MCF 10A (cell line): ENCODE measurements at regions of chr18 and their contacts with region 1.

Region 1: GRCh38 chr18:24488824-24489493 is 28.5 kb downstream of the HRH4 start:
- DNase-seq: peak; percentile 52
- H3K4me3 Mint-ChIP-seq: no peak overlapping the region
- H3K27ac Mint-ChIP-seq: no peak overlapping the region
- H3K4me1 Mint-ChIP-seq: peaks cover 9% of the 10 kb centered on the region
- H3K27me3 Mint-ChIP-seq: no peaks in the 10 kb centered on the region
- CTCF ChIP-seq: peak; percentile 59

Region 2: GRCh38 chr18:23406271-23406787 is 1082.6 kb before region 1 on chr18:
- CTCF ChIA-PET with region 1: no interaction called
- POLR2A ChIA-PET with region 1: no interaction called
- intact Hi-C with region 1: no loop called
- DNase-seq: no peak
- H3K4me3 Mint-ChIP-seq: no peak overlapping the region
- H3K27ac Mint-ChIP-seq: no peak overlapping the region
- H3K4me1 Mint-ChIP-seq: no peaks in the 10 kb centered on the region
- H3K27me3 Mint-ChIP-seq: no peaks in the 10 kb centered on the region
- CTCF ChIP-seq: no peak

Region 3: GRCh38 chr18:24271381-24272331 is 217.3 kb before region 1 on chr18:
- CTCF ChIA-PET with region 1: interaction called, 3 read pairs
- POLR2A ChIA-PET with region 1: no interaction called
- intact Hi-C with region 1: loop called (anchors 2 kb)
- DNase-seq: peak; percentile 79
- H3K4me3 Mint-ChIP-seq: peak overlapping the region; percentile 96
- H3K27ac Mint-ChIP-seq: peak overlapping the region; percentile 65
- H3K4me1 Mint-ChIP-seq: peaks cover 26% of the 10 kb centered on the region
- H3K27me3 Mint-ChIP-seq: no peaks in the 10 kb centered on the region
- CTCF ChIP-seq: no peak

Region 4: GRCh38 chr18:24432618-24433017 is 56.3 kb before region 1 on chr18:
- CTCF ChIA-PET with region 1: interaction called, 14 read pairs
- POLR2A ChIA-PET with region 1: no interaction called
- intact Hi-C with region 1: no loop called
- DNase-seq: no peak
- H3K4me3 Mint-ChIP-seq: no peak overlapping the region
- H3K27ac Mint-ChIP-seq: no peak overlapping the region
- H3K4me1 Mint-ChIP-seq: peaks cover 6% of the 10 kb centered on the region
- H3K27me3 Mint-ChIP-seq: no peaks in the 10 kb centered on the region
- CTCF ChIP-seq: no peak

Region 5: GRCh38 chr18:24475926-24476589 is 12.9 kb before region 1 on chr18:
- CTCF ChIA-PET with region 1: interaction called, 16 read pairs
- POLR2A ChIA-PET with region 1: no interaction called
- intact Hi-C with region 1: no loop called
- DNase-seq: no peak
- H3K4me3 Mint-ChIP-seq: no peak overlapping the region
- H3K27ac Mint-ChIP-seq: no peak overlapping the region
- H3K4me1 Mint-ChIP-seq: no peaks in the 10 kb centered on the region
- H3K27me3 Mint-ChIP-seq: no peaks in the 10 kb centered on the region
- CTCF ChIP-seq: no peak

Region 6: DNA sequence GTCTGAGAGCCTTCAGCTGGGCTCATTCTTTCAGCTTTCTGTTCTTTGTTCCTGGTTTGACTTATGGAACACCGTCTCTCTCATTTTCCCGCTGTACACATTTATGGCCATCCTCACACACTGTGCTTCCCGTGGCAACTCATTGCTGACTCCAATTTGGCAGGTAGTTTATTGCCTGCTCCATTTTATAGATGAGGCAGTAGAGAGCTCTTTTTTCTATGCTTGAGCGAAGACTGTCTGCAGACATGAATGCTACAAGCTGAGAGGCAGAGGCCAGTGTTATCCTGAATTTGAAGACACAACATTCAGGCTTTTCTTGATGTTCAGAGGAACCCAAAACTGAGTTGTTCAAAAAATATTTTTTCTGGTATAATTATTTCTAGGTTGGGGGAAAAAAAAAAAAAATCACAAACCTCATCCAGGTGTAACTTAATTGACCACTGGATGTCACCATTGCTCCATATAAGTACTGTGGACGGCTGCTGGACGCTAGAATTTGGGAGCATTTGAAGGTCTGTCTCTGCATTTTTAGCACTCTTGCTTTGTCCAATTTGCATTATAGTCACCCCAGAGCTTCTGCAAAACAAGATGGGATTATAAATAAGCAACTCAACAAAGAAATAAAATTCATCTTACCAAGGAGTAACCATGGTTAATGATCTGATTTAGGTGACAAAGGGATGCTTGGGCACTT is 55.0 kb after region 1 on chr18:
- CTCF ChIA-PET with region 1: interaction called, 11 read pairs
- POLR2A ChIA-PET with region 1: no interaction called
- intact Hi-C with region 1: no loop called
- DNase-seq: peak; percentile 61
- H3K4me3 Mint-ChIP-seq: no peak overlapping the region
- H3K27ac Mint-ChIP-seq: no peak overlapping the region
- H3K4me1 Mint-ChIP-seq: no peaks in the 10 kb centered on the region
- H3K27me3 Mint-ChIP-seq: no peaks in the 10 kb centered on the region
- CTCF ChIP-seq: peak; percentile 46

Region 7: GRCh38 chr18:24704946-24705630 is 216.1 kb after region 1 on chr18:
- CTCF ChIA-PET with region 1: no interaction called
- POLR2A ChIA-PET with region 1: no interaction called
- intact Hi-C with region 1: no loop called
- DNase-seq: no peak
- H3K4me3 Mint-ChIP-seq: no peak overlapping the region
- H3K27ac Mint-ChIP-seq: no peak overlapping the region
- H3K4me1 Mint-ChIP-seq: no peaks in the 10 kb centered on the region
- H3K27me3 Mint-ChIP-seq: no peaks in the 10 kb centered on the region
- CTCF ChIP-seq: no peak

Region 8: GRCh38 chr18:24734058-24734457 is 245.1 kb after region 1 on chr18:
- CTCF ChIA-PET with region 1: interaction called, 14 read pairs
- POLR2A ChIA-PET with region 1: no interaction called
- intact Hi-C with region 1: no loop called
- DNase-seq: peak; percentile 15
- H3K4me3 Mint-ChIP-seq: no peak overlapping the region
- H3K27ac Mint-ChIP-seq: no peak overlapping the region
- H3K4me1 Mint-ChIP-seq: no peaks in the 10 kb centered on the region
- H3K27me3 Mint-ChIP-seq: peaks cover 14% of the 10 kb centered on the region
- CTCF ChIP-seq: no peak